Left ventricle myocardium inferior (tissue), 1 donor: ENCODE measurements at regions of chr18 and their contacts with region 1.

Region 1: GRCh38 chr18:63518178-63519012 is 23.8 kb upstream of the SERPINB12 start:
- DNase-seq: no peak
- H3K4me3 ChIP-seq: no peak overlapping the region
- H3K27ac ChIP-seq: no peak overlapping the region
- H3K4me1 ChIP-seq: no peaks in the 10 kb centered on the region
- H3K27me3 ChIP-seq: peaks cover 27% of the 10 kb centered on the region
- CTCF ChIP-seq: peak; percentile 80

Region 2: DNA sequence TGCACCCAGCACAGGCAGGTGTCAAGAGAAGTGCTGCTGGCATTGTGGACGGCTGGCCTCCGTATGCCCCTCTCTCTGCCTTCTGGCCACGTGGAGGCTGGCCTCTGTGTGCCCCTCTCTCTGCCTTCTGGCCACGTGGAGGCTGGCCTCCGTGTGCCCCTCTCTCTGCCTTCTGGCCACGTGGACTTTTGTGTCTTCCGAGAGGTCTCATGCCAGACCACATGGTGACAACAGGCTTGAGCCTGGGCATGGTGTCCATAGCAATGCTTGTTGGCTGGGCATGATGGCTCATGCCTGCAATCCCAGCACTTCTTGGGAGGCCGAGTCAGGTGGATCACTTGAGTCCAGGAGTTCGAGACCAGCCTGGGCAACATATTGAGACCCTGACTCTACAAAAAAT is 49.4 kb after region 1 on chr18:
- intact Hi-C with region 1: no loop called
- DNase-seq: no peak
- H3K4me3 ChIP-seq: no peak overlapping the region
- H3K27ac ChIP-seq: no peak overlapping the region
- H3K4me1 ChIP-seq: no peaks in the 10 kb centered on the region
- H3K27me3 ChIP-seq: no peaks in the 10 kb centered on the region
- CTCF ChIP-seq: no peak

Region 3: GRCh38 chr18:63578357-63578958 is 60.1 kb after region 1 on chr18:
- intact Hi-C with region 1: loop called (anchors 2 kb)
- DNase-seq: no peak
- H3K4me3 ChIP-seq: no peak overlapping the region
- H3K27ac ChIP-seq: no peak overlapping the region
- H3K4me1 ChIP-seq: no peaks in the 10 kb centered on the region
- H3K27me3 ChIP-seq: peaks cover 4% of the 10 kb centered on the region
- CTCF ChIP-seq: peak; percentile 78

Region 4: GRCh38 chr18:63848159-63848558 is 329.8 kb after region 1 on chr18:
- intact Hi-C with region 1: loop called (anchors 10 kb)
- DNase-seq: no peak
- H3K4me3 ChIP-seq: no peak overlapping the region
- H3K27ac ChIP-seq: no peak overlapping the region
- H3K4me1 ChIP-seq: no peaks in the 10 kb centered on the region
- H3K27me3 ChIP-seq: peaks cover 23% of the 10 kb centered on the region
- CTCF ChIP-seq: peak; percentile 52